Natural killer cell (primary cell): ENCODE measurements at regions of chr2 and their contacts with region 1.

Region 1: GRCh38 chr2:9739531-9739964 is 103.7 kb upstream of the TAF1B start:
- DNase-seq: peak; percentile 40 to 72
- ATAC-seq: peak; percentile 57 to 71 (median 60)
- H3K4me3 ChIP-seq: peak overlapping the region; percentile 2
- H3K4me3 Mint-ChIP-seq: peak overlapping the region; percentile 86
- H3K27ac ChIP-seq: peak overlapping the region; percentile 62
- H3K27ac Mint-ChIP-seq: peak overlapping the region; percentile 79 to 87
- H3K4me1 ChIP-seq: peaks cover 41% of the 10 kb centered on the region
- H3K4me1 Mint-ChIP-seq: peaks cover 41 to 65% of the 10 kb centered on the region in 2 donors
- H3K27me3 ChIP-seq: no peaks in the 10 kb centered on the region
- H3K27me3 Mint-ChIP-seq: no peaks in the 10 kb centered on the region
- CTCF ChIP-seq: no peak

Region 2: GRCh38 chr2:9752441-9753275 is 13.1 kb after region 1 on chr2:
- intact Hi-C with region 1: loop called (anchors 2 kb)
- DNase-seq: peak; percentile 44 to 78
- ATAC-seq: peak; percentile 43 to 68 (median 59)
- H3K4me3 ChIP-seq: no peak overlapping the region
- H3K4me3 Mint-ChIP-seq: peak overlapping the region; percentile 79
- H3K27ac ChIP-seq: peak overlapping the region; percentile 64
- H3K27ac Mint-ChIP-seq: peak overlapping the region; percentile 78 to 93
- H3K4me1 ChIP-seq: peaks cover 57% of the 10 kb centered on the region
- H3K4me1 Mint-ChIP-seq: peaks cover 42 to 68% of the 10 kb centered on the region in 2 donors
- H3K27me3 ChIP-seq: no peaks in the 10 kb centered on the region
- H3K27me3 Mint-ChIP-seq: peaks cover 0 to 33% of the 10 kb centered on the region in 2 donors
- CTCF ChIP-seq: no peak

Region 3: GRCh38 chr2:9897331-9897737 is 157.8 kb after region 1 on chr2:
- intact Hi-C with region 1: no loop called
- DNase-seq: no peak
- ATAC-seq: no peak
- H3K4me3 ChIP-seq: no peak overlapping the region
- H3K4me3 Mint-ChIP-seq: no peak overlapping the region
- H3K27ac ChIP-seq: no peak overlapping the region
- H3K27ac Mint-ChIP-seq: peak overlapping the region in 1 of 2 donors; percentile 7
- H3K4me1 ChIP-seq: no peaks in the 10 kb centered on the region
- H3K4me1 Mint-ChIP-seq: peaks cover 6 to 11% of the 10 kb centered on the region in 2 donors
- H3K27me3 ChIP-seq: no peaks in the 10 kb centered on the region
- H3K27me3 Mint-ChIP-seq: no peaks in the 10 kb centered on the region
- CTCF ChIP-seq: no peak